ENCODE measurements at regions of chrX and their contacts with region 1.

Region 1: DNA sequence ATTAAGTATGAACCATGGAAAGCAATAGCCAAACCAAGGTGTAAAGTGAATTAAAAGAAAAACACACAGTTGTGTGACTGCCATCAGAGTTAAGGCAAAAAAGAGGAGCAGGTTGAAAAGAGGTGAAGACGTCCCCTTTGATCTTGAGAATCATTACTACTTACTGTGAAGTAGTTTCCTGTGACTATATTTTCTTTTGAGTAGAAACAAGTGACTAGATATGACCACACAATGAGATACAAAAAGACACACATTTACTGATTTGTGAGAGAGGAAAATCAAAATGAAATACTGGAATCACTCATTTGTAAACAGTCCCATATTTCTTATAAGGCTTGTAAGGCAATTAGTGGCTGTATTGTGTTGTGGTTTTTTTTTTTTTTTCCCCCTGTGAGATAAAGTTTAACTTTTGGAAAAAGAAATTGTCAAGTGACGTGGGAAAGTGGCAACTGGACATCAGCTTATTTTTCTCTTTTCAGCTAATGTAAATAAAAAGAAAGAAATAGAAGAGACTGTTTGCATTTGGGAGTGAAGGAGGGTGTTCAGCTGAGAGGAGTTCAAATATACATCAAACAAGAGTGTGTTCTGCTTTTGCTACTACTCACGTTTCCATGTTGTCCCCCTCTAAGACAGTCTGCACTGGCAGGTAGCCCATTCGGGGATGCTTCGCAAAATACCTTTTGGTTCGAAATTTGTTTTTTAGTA is 106.4 kb upstream of the FTHL17 start:
- DNase-seq: peak; percentile 42
- ATAC-seq: peak; percentile 82
- H3K4me3 ChIP-seq: no peak overlapping the region
- H3K27ac ChIP-seq: peak overlapping the region; percentile 59
- H3K4me1 ChIP-seq: no peaks in the 10 kb centered on the region
- H3K27me3 ChIP-seq: no peaks in the 10 kb centered on the region
- CTCF ChIP-seq: no peak
- EP300 ChIP-seq: no peak
- POLR2A ChIP-seq: no peak
- RAD21 ChIP-seq: no peak

Region 2: GRCh38 chrX:31061091-31061490 is 117.1 kb before region 1 on chrX:
- CTCF ChIA-PET with region 1: no interaction called
- POLR2A ChIA-PET with region 1: no interaction called
- RAD21 ChIA-PET with region 1: no interaction called
- SMC1A ChIA-PET with region 1: no interaction called
- in situ Hi-C with region 1: no loop called
- intact Hi-C with region 1: loop called (anchors 10 kb)
- DNase-seq: no peak
- ATAC-seq: peak; percentile 86
- H3K4me3 ChIP-seq: no peak overlapping the region
- H3K27ac ChIP-seq: peak overlapping the region; percentile 22; the same call in 1 of the 2 replicates
- H3K4me1 ChIP-seq: peaks cover 9% of the 10 kb centered on the region
- H3K27me3 ChIP-seq: no peaks in the 10 kb centered on the region
- CTCF ChIP-seq: no peak
- EP300 ChIP-seq: no peak
- POLR2A ChIP-seq: no peak
- RAD21 ChIP-seq: no peak

Region 3: DNA sequence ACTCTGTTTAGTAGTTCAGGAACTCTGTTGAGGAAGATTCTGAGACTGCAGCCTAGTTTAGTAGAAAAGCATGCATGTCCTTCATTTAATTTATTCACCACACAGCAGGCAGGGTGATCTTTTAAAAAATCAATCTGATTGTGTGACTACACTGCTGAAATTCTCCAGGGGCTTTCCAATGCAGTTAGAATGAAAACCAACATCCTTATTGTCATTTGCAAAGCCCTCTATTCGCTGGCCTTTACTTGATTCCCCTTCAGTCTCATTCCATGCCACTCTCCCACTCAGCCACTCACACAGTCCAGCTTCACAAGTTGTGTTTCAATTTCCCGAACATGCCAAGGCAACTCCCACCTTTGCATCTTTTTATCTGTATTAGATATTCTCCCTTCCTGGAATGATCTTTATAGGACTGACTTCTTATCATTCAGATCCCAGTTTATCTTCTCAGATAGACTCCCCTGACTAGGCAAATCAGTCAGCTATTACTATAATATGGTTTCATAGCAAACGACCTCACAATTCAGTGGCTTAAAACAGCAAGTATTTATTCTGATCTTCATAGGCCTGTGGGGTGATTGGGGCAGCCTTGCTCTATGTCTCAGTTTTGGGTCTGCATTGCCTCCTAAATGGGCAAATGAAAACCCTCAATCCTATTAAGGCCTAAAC is 85.1 kb before region 1 on chrX:
- CTCF ChIA-PET with region 1: no interaction called
- POLR2A ChIA-PET with region 1: no interaction called
- RAD21 ChIA-PET with region 1: no interaction called
- SMC1A ChIA-PET with region 1: no interaction called
- in situ Hi-C with region 1: no loop called
- intact Hi-C with region 1: loop called (anchors 2 kb)
- DNase-seq: peak; percentile 30
- ATAC-seq: peak; percentile 86
- H3K4me3 ChIP-seq: no peak overlapping the region
- H3K27ac ChIP-seq: peak overlapping the region; percentile 54
- H3K4me1 ChIP-seq: peaks cover 8% of the 10 kb centered on the region
- H3K27me3 ChIP-seq: no peaks in the 10 kb centered on the region
- CTCF ChIP-seq: no peak
- EP300 ChIP-seq: peak in 1 of 2 experiments; percentile 49; a peak in 1 of 4 replicates
- POLR2A ChIP-seq: no peak
- RAD21 ChIP-seq: no peak

Region 4: GRCh38 chrX:31099536-31100090 is 78.6 kb before region 1 on chrX:
- CTCF ChIA-PET with region 1: no interaction called
- POLR2A ChIA-PET with region 1: interaction called, 4 read pairs
- RAD21 ChIA-PET with region 1: interaction called, 3 read pairs
- SMC1A ChIA-PET with region 1: interaction called, 7 read pairs
- in situ Hi-C with region 1: no loop called
- intact Hi-C with region 1: loop called (anchors 1 kb)
- DNase-seq: peak; percentile 77
- ATAC-seq: peak; percentile 93
- H3K4me3 ChIP-seq: no peak overlapping the region
- H3K27ac ChIP-seq: peak overlapping the region; percentile 54
- H3K4me1 ChIP-seq: peaks cover 14% of the 10 kb centered on the region; the same call in 1 of the 2 replicates
- H3K27me3 ChIP-seq: no peaks in the 10 kb centered on the region
- CTCF ChIP-seq: no peak
- EP300 ChIP-seq: peak; percentile 64 to 78
- POLR2A ChIP-seq: no peak
- RAD21 ChIP-seq: 0 out of 2 replicates have a peak, but pooled peaks have one; percentile 7

Region 5: GRCh38 chrX:31136144-31136611 is 42.0 kb before region 1 on chrX:
- CTCF ChIA-PET with region 1: no interaction called
- POLR2A ChIA-PET with region 1: interaction called, 5 read pairs
- RAD21 ChIA-PET with region 1: no interaction called
- SMC1A ChIA-PET with region 1: interaction called, 3 read pairs
- in situ Hi-C with region 1: no loop called
- intact Hi-C with region 1: loop called (anchors 2 kb)
- DNase-seq: peak; percentile 82
- ATAC-seq: peak; percentile 94
- H3K4me3 ChIP-seq: no peak overlapping the region
- H3K27ac ChIP-seq: peak overlapping the region; percentile 63
- H3K4me1 ChIP-seq: peaks cover 11% of the 10 kb centered on the region
- H3K27me3 ChIP-seq: no peaks in the 10 kb centered on the region
- CTCF ChIP-seq: no peak
- EP300 ChIP-seq: peak; percentile 63 to 87; a peak in 2 of 4 replicates
- POLR2A ChIP-seq: no peak
- RAD21 ChIP-seq: no peak

Region 6: DNA sequence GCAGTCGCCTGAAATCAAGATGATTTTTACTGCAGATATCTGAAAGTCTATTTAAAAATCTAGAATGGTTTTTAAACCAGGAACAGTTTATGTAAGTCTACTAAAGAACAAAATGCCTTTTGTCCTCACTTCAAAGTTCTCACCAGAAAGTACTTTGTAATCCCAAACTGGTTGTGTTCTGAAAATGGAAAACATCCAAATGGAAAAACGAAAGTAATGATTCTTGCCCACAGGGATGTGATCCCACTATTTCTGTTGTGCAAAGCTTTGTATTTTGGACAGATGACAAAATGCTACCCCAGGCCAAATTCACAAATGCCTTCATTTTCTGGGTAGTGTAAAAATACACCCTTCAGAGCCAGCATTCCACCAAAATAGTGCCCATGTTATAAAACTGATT is 159.1 kb after region 1 on chrX:
- CTCF ChIA-PET with region 1: no interaction called
- POLR2A ChIA-PET with region 1: no interaction called
- RAD21 ChIA-PET with region 1: no interaction called
- SMC1A ChIA-PET with region 1: no interaction called
- in situ Hi-C with region 1: no loop called
- intact Hi-C with region 1: no loop called
- DNase-seq: no peak
- ATAC-seq: no peak
- H3K4me3 ChIP-seq: no peak overlapping the region
- H3K27ac ChIP-seq: no peak overlapping the region
- H3K4me1 ChIP-seq: no peaks in the 10 kb centered on the region
- H3K27me3 ChIP-seq: no peaks in the 10 kb centered on the region; a peak in 1 of 4 replicates
- CTCF ChIP-seq: no peak
- EP300 ChIP-seq: no peak
- POLR2A ChIP-seq: no peak
- RAD21 ChIP-seq: no peak

Measured in GM12878 (cell line).